ENCODE measurements at regions of chr11 and their contacts with region 1.

Region 1: DNA sequence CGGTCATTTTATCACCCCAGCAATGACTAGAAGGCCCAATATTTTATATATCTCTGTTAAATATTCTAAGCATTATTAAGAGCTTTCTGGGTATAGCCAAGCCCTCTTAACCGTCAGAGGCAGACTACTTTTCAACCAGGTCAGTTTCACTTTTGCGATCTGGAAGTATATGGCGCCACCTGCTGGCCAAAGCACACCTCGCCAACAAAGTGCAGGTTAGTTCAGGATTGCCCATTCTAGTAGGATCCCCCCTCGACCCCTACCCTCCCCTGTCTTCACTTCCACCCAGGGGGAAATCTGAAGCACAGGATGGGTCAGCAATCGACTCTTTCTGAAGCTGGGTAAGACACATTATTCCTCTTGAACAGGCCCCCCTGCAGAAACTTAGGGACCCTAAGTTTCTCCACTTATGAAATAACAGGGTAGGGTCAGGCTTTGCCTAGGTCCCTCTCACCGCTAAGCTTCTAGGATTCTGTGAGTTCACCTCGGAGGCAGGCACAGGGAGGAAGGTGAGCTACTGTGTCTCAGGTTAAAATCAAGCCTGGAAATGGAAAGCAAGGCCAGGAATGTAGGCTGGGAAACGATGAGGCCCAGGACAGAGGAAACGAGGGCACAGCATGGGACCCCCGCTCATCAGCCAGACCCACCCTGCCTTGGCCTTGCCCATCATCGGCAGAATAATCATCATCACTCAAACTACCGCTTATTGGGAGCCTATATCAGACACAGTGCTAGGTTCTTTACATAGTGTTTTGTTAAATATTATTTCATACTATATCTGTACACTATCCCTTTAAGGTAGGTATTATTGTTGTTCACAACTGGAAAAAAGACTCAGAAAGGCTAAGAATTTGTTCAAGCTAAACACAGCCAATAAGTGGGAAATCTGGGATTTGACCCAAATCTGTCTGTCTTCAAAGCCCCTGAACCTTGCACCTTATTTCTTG is 35.6 kb downstream of the KCNJ1 start:
- ATAC-seq: peak; percentile 53 to 96 (median 80)
- H3K4me3 ChIP-seq: no peak overlapping the region
- H3K27ac ChIP-seq: no peak overlapping the region
- H3K4me1 ChIP-seq: no peaks in the 10 kb centered on the region

Region 2: DNA sequence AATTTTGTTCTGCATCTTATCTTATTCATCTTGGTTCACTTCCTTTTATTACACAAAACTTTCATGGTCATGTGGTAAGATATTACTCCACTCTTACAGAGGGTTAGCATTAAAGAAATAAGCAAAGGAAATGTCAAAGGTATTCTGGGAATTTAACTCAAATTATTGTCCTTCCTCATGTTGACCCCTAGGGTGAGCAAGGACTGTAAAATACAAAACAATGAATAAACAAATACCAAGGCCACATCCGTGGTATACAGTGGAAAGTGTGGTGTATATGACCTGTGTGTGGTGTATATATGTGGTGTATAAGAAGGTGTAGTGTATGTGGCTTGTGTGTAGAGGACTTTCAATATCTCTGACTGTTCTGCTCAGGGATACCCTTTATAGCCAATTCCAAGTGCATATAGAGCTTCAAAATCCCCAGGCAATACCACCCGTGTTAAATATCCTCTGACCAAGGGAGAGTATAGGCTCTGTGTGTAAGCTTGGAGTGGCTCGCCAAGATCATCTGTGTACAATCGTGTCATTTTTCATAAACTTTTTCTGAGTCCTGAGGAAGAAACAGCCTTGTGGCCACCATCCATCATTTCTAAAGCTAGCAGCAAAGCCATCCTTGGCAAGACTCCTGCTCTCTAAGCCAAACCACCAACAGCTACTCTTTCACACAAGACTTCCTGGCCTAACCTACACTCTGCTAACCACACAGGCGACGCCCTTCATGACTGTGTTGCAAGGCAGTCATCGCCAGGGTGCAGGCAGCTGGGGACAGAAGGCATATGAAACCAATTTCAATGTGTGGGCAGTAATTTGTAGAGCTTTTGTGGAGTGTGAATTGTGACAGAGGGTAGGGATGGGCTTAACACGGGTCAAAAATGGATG is 792.1 kb before region 1 on chr11:
- in situ Hi-C with region 1: loop called in 4 of 9 experiments (anchors 25 kb)
- ATAC-seq: peak in 3 of 8 experiments; percentile 49 to 100 (median 100)
- H3K4me3 ChIP-seq: no peak overlapping the region
- H3K27ac ChIP-seq: no peak overlapping the region
- H3K4me1 ChIP-seq: peaks cover 4 to 5% of the 10 kb centered on the region in 2 donors

Region 3: DNA sequence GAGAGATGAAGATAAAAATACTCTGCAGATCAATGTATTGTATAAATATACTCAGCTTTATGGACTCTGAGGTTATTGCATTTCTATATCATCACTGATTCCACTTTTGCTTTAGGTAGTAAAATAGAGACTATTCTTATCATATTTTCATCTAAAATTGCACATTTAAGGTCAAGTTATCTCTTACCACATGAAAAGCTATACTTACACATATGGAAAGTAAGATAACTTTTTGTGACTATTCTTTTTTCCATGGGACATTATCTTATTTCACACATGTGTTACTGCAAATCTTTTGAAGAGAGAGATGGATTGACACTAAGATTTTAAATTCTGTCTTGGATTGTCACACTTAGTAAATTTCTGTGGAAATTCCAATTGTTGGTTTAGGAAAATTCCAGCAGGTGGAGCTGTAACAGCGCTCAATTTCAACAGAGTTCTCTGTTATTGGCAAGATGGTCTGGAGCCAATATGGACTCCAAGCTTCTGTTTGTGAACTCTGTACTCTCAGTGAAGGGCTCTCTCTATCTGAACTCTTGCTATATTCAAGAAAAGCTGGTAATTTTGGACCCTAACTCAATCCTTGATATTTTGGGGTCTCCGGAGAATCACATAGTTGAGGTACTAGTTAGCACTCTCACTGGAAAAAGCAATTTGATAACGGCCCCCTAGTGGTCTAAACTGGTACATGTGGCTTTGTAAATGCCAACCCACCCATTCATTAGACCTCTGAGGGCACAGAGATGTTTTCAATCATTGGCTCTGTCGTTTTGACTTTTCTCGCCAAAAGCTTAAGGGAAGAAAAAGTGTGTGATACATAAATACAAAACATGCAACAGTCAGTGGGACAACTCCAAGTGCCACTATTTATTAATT is 673.8 kb before region 1 on chr11:
- in situ Hi-C with region 1: loop called in 7 of 9 experiments (anchors 25 kb)
- ATAC-seq: peak in 5 of 8 experiments; percentile 38 to 90 (median 85)
- H3K4me3 ChIP-seq: no peak overlapping the region
- H3K27ac ChIP-seq: no peak overlapping the region
- H3K4me1 ChIP-seq: peaks cover 0 to 7% of the 10 kb centered on the region in 2 donors

Region 4: GRCh38 chr11:128172046-128172878 is 659.2 kb before region 1 on chr11:
- in situ Hi-C with region 1: loop called in 8 of 9 experiments (anchors 10 to 25 kb)
- ATAC-seq: peak; percentile 63 to 83 (median 74)
- H3K4me3 ChIP-seq: no peak overlapping the region
- H3K27ac ChIP-seq: no peak overlapping the region
- H3K4me1 ChIP-seq: peaks cover 3 to 8% of the 10 kb centered on the region in 2 donors

Region 5: GRCh38 chr11:128290106-128290840 is 541.2 kb before region 1 on chr11:
- in situ Hi-C with region 1: loop called in 4 of 9 experiments (anchors 25 kb)
- ATAC-seq: peak; percentile 80 to 96 (median 87)
- H3K4me3 ChIP-seq: no peak overlapping the region
- H3K27ac ChIP-seq: no peak overlapping the region
- H3K4me1 ChIP-seq: peaks cover 11 to 14% of the 10 kb centered on the region in 2 donors

Region 6: GRCh38 chr11:128552783-128553661 is 278.4 kb before region 1 on chr11:
- in situ Hi-C with region 1: loop called in 1 of 9 experiments (anchors 25 kb)
- ATAC-seq: peak; percentile 30 to 79 (median 70)
- H3K4me3 ChIP-seq: no peak overlapping the region
- H3K27ac ChIP-seq: no peak overlapping the region
- H3K4me1 ChIP-seq: peaks cover 0 to 19% of the 10 kb centered on the region in 2 donors

Measured in motor neuron (in vitro differentiated cells).